Ovary (tissue), 10 donors: ENCODE measurements at regions of chr18 and their contacts with region 1.

Region 1: GRCh38 chr18:37230768-37231167 is 334.8 kb downstream of the CELF4 start:
- DNase-seq: no peak
- H3K4me3 ChIP-seq: no peak overlapping the region
- H3K27ac ChIP-seq: no peak overlapping the region
- H3K4me1 ChIP-seq: no peaks in the 10 kb centered on the region
- H3K27me3 ChIP-seq: no peaks in the 10 kb centered on the region
- CTCF ChIP-seq: no peak
- EP300 ChIP-seq: no peak
- POLR2A ChIP-seq: no peak

Region 2: GRCh38 chr18:37393945-37394609 is 163.3 kb after region 1 on chr18:
- intact Hi-C with region 1: loop called in 1 of 4 experiments (anchors 5 kb)
- DNase-seq: peak; percentile 72 to 83 (median 76)
- H3K4me3 ChIP-seq: peak overlapping the region; percentile 35
- H3K27ac ChIP-seq: peak overlapping the region in 1 of 2 donors; percentile 16
- H3K4me1 ChIP-seq: peaks cover 14% of the 10 kb centered on the region
- H3K27me3 ChIP-seq: no peaks in the 10 kb centered on the region
- CTCF ChIP-seq: no peak
- EP300 ChIP-seq: no peak
- POLR2A ChIP-seq: no peak